GM23248 (cell line): ENCODE measurements at regions of chr1 and their contacts with region 1.

Region 1: GRCh38 chr1:40612345-40612831 is 53.1 kb downstream of the RIMS3 start:
- DNase-seq: peak; percentile 74
- H3K4me3 ChIP-seq: no peak overlapping the region
- H3K27ac ChIP-seq: no peak overlapping the region
- H3K4me1 ChIP-seq: no peaks in the 10 kb centered on the region
- H3K27me3 ChIP-seq: peaks cover 4% of the 10 kb centered on the region

Region 2: GRCh38 chr1:40849801-40850592 is 237.6 kb after region 1 on chr1:
- in situ Hi-C with region 1: loop called (anchors 10 kb)
- DNase-seq: peak; percentile 70
- H3K4me3 ChIP-seq: no peak overlapping the region
- H3K27ac ChIP-seq: no peak overlapping the region
- H3K4me1 ChIP-seq: no peaks in the 10 kb centered on the region
- H3K27me3 ChIP-seq: no peaks in the 10 kb centered on the region